AG04450 (cell line): ENCODE measurements at regions of chr4 and their contacts with region 1.

Region 1: DNA sequence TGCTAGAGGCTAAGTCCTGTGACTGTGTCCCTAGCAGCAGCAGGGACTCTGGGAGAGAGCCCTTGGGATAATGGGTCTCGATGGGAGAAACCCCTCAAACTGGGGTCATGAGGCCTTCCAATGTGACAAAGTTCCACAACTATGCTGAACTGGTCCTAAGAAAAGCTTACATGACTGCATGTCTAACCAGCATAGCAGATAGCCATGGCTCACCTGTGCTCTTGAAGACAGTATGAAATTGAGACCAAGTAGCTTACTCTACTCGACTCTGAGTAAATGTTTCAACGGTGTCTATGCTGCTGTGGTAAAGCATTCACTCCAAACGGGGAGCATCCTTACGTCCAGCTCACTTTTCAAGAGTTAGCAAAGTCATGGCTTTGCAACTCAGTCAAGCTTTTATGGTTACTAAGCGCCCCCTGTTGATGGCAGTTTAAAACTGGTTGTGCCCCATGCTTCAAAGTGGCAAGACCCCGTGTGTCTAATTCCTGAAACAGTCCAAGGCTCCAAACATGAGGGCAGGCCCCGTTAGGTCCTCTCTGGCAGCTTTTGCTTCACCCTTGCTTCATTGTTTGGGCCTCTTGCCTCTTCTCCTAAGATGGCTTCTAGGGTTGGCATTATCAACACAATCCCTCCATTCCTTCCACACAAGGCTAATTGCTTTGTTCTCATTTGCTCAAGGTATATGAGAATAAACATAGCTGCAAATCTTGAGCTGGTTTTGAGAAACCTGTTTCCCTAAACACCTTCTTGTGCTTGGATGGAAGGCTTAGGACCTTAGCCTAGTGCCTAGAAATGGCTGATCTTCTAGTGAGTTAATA is 46.6 kb downstream of the CCNG2 start:
- DNase-seq: peak; percentile 61
- H3K4me3 ChIP-seq: no peak overlapping the region
- H3K27ac ChIP-seq: no peak overlapping the region
- H3K27me3 ChIP-seq: peaks cover 16% of the 10 kb centered on the region
- CTCF ChIP-seq: peak; percentile 82

Region 2: GRCh38 chr4:76504613-76505465 is 698.8 kb before region 1 on chr4:
- CTCF ChIA-PET with region 1: interaction called, 19 read pairs
- POLR2A ChIA-PET with region 1: no interaction called
- DNase-seq: peak; percentile 11
- H3K4me3 ChIP-seq: no peak overlapping the region
- H3K27ac ChIP-seq: no peak overlapping the region
- H3K27me3 ChIP-seq: peaks cover 14% of the 10 kb centered on the region
- CTCF ChIP-seq: peak; percentile 73

Region 3: DNA sequence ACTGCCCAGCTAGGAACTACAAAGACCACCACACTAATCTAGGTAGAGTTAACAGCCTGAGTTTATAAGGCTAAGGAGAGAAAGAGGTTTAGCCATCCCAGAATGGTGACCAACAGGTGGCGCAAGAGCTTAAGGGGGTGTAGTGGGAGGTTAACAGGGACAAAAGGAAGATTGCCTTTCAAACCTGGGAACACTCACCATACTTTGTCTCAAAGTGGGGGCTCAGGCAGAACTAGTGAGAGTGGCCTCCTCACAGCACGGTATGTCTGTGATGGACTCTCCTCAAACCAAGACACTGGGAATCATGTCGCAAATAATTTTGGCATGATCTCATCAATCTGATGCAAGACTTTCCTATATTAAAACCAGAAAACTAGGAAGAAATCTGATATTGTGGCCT is 151.2 kb before region 1 on chr4:
- CTCF ChIA-PET with region 1: interaction called, 162 read pairs
- POLR2A ChIA-PET with region 1: interaction called, 3 read pairs
- DNase-seq: no peak
- H3K4me3 ChIP-seq: no peak overlapping the region
- H3K27ac ChIP-seq: peak overlapping the region; percentile 25
- H3K27me3 ChIP-seq: no peaks in the 10 kb centered on the region
- CTCF ChIP-seq: peak; percentile 55

Region 4: DNA sequence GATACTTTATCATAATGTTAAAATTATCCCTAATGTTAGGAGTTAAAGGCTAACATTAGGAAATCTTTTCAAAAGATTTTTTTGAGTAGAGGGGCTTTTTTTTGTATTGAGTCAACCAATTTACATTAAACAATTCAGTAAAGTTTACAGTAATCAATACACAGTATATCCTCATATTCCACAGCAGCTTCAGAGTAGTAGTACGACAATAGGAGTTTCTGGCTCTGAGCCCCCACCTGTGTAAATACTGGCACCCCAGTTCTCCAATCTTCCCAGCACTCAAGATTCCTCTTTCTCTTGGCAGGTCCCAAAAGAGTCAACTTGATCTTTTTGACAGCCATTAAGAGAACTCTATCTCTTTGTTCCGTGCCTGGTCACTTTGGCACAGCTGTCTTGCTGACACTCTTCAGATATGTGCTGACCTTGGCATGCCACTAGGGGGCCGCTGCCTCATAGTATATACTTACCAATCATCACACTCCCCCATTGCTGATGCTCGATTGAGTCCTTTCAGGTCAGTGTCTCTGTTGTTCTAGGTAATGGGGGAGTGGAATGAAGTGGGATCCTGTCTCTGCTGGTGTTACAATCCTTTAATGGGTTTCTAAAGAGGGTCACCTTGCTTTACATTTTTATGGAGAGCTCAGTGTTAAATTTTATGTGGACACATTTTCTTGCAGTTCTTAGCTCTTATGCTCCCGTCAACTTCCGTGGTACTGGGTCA is 108.3 kb before region 1 on chr4:
- CTCF ChIA-PET with region 1: interaction called, 194 read pairs
- POLR2A ChIA-PET with region 1: no interaction called
- DNase-seq: peak; percentile 21
- H3K4me3 ChIP-seq: no peak overlapping the region
- H3K27ac ChIP-seq: no peak overlapping the region
- H3K27me3 ChIP-seq: no peaks in the 10 kb centered on the region
- CTCF ChIP-seq: peak; percentile 90

Region 5: DNA sequence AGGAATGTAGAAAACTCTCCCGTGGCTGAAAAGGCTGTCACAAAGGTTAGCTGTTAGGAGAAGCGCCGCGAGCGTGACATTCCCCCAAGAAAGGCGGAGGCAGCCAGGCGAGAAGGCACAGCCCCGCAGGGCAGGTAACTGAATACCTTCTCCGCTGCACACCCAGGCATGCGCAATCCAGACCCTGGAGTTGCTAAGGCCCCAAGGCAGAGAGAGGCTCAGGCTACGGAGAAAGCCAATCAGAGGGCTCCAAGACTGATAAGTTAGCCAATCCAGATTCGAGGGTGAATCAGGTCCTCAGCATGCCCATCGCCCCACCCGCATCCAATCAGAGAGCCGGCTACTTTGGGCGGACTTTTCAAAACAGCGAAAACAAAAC is 47.1 kb before region 1 on chr4:
- CTCF ChIA-PET with region 1: interaction called, 16 read pairs
- POLR2A ChIA-PET with region 1: no interaction called
- DNase-seq: peak; percentile 99
- H3K4me3 ChIP-seq: peak overlapping the region; percentile 98
- H3K27ac ChIP-seq: peak overlapping the region; percentile 99
- H3K27me3 ChIP-seq: peaks cover 13% of the 10 kb centered on the region
- CTCF ChIP-seq: no peak

Region 6: DNA sequence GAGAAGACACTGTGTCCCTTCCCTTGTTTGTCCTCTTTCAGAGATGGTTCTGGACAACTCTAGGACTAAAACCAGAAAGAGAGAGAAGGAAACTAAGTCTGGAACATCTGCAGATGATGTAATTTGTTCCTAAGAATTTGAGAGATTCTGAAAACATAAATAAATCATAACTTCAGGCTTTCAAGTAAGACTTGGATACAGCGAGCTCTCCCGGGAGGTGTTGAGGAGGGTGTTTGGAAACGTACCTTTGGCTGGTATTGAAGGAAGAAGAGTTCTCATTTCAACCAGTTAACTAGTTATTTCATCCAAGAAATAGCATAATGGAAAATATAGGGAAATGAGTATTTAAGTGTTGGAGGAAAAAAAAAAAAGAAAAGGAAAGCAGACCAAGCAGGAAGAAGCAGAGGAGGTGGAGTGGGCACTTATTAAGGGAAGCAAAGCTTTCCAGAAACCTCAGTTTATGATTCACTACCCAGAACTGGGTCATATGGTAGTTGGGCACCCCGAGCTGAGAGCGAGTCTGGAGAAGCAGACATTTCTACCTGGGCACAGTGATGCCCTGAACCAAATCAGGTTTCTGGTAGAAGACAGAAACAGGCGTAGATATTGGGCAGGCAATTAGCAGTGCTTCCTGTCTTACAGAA is 19.7 kb before region 1 on chr4:
- CTCF ChIA-PET with region 1: interaction called, 47 read pairs
- POLR2A ChIA-PET with region 1: no interaction called
- DNase-seq: no peak
- H3K4me3 ChIP-seq: no peak overlapping the region
- H3K27ac ChIP-seq: no peak overlapping the region
- H3K27me3 ChIP-seq: peaks cover 37% of the 10 kb centered on the region
- CTCF ChIP-seq: no peak